Breast epithelium (tissue), 4 donors: ENCODE measurements at regions of chr5 and their contacts with region 1.

Region 1: GRCh38 chr5:117788594-117788993 is 1199.8 kb downstream of the DTWD2 start:
- DNase-seq: no peak
- H3K4me3 ChIP-seq: no peak overlapping the region
- H3K27ac ChIP-seq: no peak overlapping the region
- H3K4me1 ChIP-seq: no peaks in the 10 kb centered on the region
- H3K27me3 ChIP-seq: no peaks in the 10 kb centered on the region
- CTCF ChIP-seq: no peak
- POLR2A ChIP-seq: no peak

Region 2: GRCh38 chr5:117165068-117165467 is 623.5 kb before region 1 on chr5:
- intact Hi-C with region 1: no loop called
- DNase-seq: no peak
- H3K4me3 ChIP-seq: no peak overlapping the region
- H3K27ac ChIP-seq: no peak overlapping the region
- H3K4me1 ChIP-seq: no peaks in the 10 kb centered on the region
- H3K27me3 ChIP-seq: no peaks in the 10 kb centered on the region
- CTCF ChIP-seq: no peak
- POLR2A ChIP-seq: no peak

Region 3: DNA sequence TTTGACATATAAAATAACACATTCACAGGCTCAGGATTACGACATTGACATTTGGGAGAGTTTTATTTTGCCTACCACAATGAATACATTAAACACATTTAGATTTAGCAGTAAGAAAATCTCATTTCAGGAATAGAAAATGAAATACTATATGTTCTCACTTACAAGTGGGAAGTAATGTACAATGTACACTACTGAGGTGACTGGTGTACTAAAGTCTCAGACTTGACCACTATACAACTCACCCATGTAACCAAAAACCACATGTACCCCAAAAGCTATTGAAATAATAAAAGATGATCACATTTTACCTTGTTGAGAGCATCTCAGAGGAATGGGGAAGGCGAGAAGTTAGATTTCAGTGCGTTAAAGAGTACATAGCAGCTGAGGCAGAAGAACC is 11.6 kb before region 1 on chr5:
- intact Hi-C with region 1: loop called (anchors 1 kb)
- DNase-seq: no peak
- H3K4me3 ChIP-seq: no peak overlapping the region
- H3K27ac ChIP-seq: no peak overlapping the region
- H3K4me1 ChIP-seq: no peaks in the 10 kb centered on the region
- H3K27me3 ChIP-seq: no peaks in the 10 kb centered on the region
- CTCF ChIP-seq: no peak
- POLR2A ChIP-seq: no peak